Brain microvascular endothelial cell (primary cell): ENCODE measurements at regions of chr4 and their contacts with region 1.

Region 1: DNA sequence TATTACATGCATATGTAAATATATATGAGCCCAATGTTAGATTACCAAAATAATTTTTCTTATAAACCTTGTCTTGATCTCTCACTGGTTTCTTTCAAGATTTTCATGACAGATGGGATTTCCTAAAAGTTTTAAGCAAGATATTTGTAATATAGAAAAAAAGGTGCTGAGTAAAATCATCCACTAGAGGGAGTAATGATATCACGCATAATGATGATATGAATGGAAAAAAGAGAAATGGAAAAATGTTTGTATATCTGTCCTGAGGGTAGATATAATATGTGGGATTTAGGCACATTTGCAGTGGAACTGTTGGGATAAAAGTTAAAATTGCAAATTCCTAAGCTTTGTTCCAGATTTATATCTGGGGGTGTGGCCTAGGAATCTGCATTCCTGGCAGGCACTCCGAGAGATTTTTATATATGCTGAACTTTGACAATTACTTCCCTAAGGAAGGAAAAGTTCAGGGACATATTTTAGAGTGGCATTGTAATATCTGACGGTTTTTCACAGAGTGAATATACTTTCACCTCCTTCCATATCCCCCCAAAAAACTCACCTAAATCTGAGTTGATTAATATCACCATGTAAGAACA is 60.5 kb downstream of the TMA16 start:
- DNase-seq: no peak
- H3K4me3 ChIP-seq: no peak overlapping the region
- H3K27ac ChIP-seq: no peak overlapping the region
- H3K27me3 ChIP-seq: no peaks in the 10 kb centered on the region
- CTCF ChIP-seq: peak; percentile 24

Region 2: GRCh38 chr4:163755013-163755412 is 200.0 kb after region 1 on chr4:
- in situ Hi-C with region 1: loop called (anchors 25 kb)
- DNase-seq: peak; percentile 16
- H3K4me3 ChIP-seq: no peak overlapping the region
- H3K27ac ChIP-seq: no peak overlapping the region
- H3K27me3 ChIP-seq: no peaks in the 10 kb centered on the region
- CTCF ChIP-seq: peak; percentile 49

Region 3: GRCh38 chr4:164731827-164732474 is 1177.0 kb after region 1 on chr4:
- in situ Hi-C with region 1: loop called (anchors 25 kb)
- DNase-seq: peak; percentile 49
- H3K4me3 ChIP-seq: no peak overlapping the region
- H3K27ac ChIP-seq: no peak overlapping the region
- H3K27me3 ChIP-seq: no peaks in the 10 kb centered on the region
- CTCF ChIP-seq: peak; percentile 91